ENCODE measurements at regions of chr11 and their contacts with region 1.

Region 1: DNA sequence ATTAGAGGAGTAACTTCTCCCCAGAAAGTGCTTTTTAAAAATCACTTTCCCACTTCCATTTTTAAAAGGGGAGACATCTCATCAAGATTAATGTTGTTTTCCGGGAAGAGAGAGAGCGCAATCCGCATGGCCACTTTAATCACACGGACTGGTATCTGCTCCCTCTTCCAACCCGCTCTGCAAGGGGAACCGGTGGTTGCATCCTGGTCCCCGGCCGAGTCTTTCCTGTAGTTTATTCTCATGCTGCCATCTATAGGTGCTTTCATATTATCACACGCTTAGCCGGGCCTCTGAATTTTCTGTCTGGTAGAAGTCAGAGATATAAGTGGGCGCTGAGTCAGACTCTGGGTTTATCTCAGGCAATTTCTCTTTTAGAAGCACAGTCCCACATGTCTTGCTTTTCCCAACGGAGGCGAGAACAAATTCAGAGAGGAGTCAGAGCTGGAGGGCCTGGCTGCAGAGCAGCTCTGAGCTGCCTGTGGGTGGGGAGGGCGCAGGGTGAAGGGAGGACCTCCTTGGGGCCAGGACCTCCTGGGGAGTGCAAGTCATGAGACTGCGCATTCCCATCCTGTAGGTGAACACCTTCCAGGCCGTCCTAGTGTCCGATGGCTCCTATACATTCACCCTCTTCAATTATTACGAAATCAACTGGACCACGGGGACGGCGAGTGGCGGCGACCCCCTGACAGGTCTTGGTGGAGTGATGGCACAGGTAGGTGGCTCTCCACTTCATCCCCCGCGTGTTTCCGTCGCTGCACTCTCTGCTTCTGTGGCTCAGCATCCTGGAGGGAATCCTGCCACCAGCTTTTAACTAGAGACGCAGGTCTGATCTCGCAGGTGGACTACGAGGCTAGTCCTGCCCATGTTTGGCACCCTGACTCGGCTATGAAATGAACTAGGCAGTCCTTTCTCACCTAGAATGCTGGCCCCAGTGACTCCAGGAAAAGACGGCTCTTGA is 11.7 kb downstream of the TECTA start:
- DNase-seq: peak; percentile 74
- H3K4me3 Mint-ChIP-seq: no peak overlapping the region
- H3K27ac Mint-ChIP-seq: no peak overlapping the region
- H3K4me1 Mint-ChIP-seq: no peaks in the 10 kb centered on the region
- H3K27me3 Mint-ChIP-seq: peaks cover 26% of the 10 kb centered on the region

Region 2: DNA sequence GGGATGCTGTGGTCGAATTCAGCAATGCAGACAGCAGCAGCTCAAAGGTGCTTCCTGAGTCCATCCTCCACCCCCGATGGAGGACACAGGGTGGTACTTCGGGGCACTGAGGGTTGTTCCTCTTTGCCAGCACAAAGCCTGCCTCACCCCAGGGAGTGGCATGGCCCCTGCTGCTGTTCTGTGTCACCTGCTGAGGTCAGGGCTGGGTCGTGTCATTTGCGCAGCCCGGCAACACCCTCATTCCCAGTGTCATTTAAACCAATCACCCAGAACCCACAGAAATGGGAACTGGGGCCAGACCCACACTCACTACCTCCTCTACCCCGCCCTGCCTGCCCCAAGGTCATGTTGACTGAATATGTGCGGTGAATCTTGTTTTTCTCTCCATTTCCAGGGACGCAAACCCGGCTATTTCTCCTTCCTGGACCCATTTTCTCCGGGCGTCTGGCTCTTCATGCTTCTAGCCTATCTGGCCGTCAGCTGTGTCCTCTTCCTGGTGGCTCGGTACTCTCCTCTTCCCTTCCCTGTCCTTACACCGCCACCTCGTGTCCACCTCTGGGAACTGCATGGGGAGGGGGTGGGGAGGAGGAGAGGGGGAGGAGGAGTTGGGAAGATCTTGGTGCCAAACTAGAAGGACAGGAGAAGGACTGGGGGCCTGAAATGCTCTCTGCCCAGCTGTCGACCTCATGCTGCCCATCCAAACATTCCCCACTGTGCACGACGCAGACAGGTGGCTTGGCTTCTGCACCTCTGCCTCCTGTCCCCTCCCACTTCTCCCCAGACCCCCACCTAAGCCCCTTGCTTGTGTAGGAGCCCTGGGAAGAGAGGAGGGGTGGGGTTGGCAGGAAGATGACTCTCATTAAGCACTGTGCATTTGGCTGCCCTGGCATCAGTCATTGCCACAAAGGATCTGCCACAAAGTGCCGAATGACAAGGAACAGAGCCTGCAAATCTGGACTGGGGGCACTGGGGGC is 160.0 kb before region 1 on chr11:
- intact Hi-C with region 1: loop called (anchors 10 kb)
- DNase-seq: peak; percentile 86
- H3K4me3 Mint-ChIP-seq: peak overlapping the region; percentile 54
- H3K27ac Mint-ChIP-seq: no peak overlapping the region
- H3K4me1 Mint-ChIP-seq: peaks cover 7% of the 10 kb centered on the region
- H3K27me3 Mint-ChIP-seq: peaks cover 7% of the 10 kb centered on the region

Region 3: DNA sequence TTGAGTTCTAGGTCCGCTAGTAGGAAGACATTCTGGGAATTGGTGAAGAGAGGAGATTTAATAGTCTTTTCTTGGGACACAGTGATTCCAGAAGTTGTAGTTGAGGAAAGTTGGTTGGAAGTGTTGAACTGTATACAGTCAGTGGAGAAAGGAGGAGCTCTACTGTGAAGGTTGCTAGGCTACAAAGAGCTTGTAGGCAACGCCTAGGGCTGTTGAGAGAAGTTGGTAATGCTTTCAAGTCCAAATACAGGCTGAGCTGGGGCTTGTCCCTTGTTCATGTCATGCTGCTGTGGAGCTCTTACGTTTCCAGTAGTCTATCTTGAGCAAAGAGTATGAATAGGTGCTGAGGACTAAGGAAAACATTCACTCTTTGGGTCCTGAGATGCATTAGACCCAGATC is 87.8 kb before region 1 on chr11:
- intact Hi-C with region 1: loop called (anchors 5 kb)
- DNase-seq: peak; percentile 65
- H3K4me3 Mint-ChIP-seq: peak overlapping the region; percentile 83
- H3K27ac Mint-ChIP-seq: peak overlapping the region; percentile 70
- H3K4me1 Mint-ChIP-seq: peaks cover 28% of the 10 kb centered on the region
- H3K27me3 Mint-ChIP-seq: peaks cover 7% of the 10 kb centered on the region

Region 4: GRCh38 chr11:121194731-121195596 is 82.2 kb after region 1 on chr11:
- intact Hi-C with region 1: loop called (anchors 10 kb)
- DNase-seq: peak; percentile 89
- H3K4me3 Mint-ChIP-seq: no peak overlapping the region
- H3K27ac Mint-ChIP-seq: no peak overlapping the region
- H3K4me1 Mint-ChIP-seq: no peaks in the 10 kb centered on the region
- H3K27me3 Mint-ChIP-seq: peaks cover 22% of the 10 kb centered on the region